H1 (cell line): ENCODE measurements at regions of chr4 and their contacts with region 1.

Region 1: DNA sequence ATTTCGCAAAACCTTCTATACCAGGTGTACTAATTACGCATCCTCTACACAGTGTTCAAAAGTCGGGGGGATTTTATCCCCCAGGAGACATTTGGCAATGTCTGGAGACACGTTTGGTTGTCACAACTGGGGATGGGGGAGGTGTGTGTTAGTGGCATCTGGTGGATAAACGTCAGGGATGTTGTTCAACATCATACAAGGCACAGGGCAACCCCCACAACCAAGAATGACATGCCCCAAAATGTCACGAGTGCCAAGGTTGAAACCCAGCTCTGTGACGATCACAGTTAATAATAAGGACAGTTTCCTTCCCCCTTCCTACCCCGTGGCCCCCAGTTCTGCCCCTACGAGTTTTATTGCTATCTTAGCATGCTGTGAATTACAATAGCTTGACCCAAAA is 15.9 kb upstream of the SEL1L3 start:
- DNase-seq: no peak
- H3K4me3 ChIP-seq: no peak overlapping the region
- H3K27ac ChIP-seq: no peak overlapping the region
- H3K4me1 ChIP-seq: peaks cover 0 to 3% (median 0%) of the 10 kb centered on the region in 4 experiments; a peak in 1 of 7 replicates
- H3K27me3 ChIP-seq: no peaks in the 10 kb centered on the region; a peak in 1 of 7 replicates
- CTCF ChIP-seq: no peak
- EP300 ChIP-seq: no peak
- POLR2A ChIP-seq: no peak
- RAD21 ChIP-seq: no peak

Region 2: GRCh38 chr4:25844961-25845712 is 33.5 kb before region 1 on chr4:
- CTCF ChIA-PET with region 1: no interaction called
- POLR2A ChIA-PET with region 1: no interaction called
- DNase-seq: no peak
- H3K4me3 ChIP-seq: no peak overlapping the region
- H3K27ac ChIP-seq: no peak overlapping the region
- H3K4me1 ChIP-seq: peaks cover 8 to 29% (median 15%) of the 10 kb centered on the region in 4 experiments
- H3K27me3 ChIP-seq: peaks cover 0 to 1% (median 0%) of the 10 kb centered on the region in 4 experiments; a peak in 1 of 7 replicates
- CTCF ChIP-seq: no peak
- EP300 ChIP-seq: no peak
- POLR2A ChIP-seq: no peak
- RAD21 ChIP-seq: no peak

Region 3: DNA sequence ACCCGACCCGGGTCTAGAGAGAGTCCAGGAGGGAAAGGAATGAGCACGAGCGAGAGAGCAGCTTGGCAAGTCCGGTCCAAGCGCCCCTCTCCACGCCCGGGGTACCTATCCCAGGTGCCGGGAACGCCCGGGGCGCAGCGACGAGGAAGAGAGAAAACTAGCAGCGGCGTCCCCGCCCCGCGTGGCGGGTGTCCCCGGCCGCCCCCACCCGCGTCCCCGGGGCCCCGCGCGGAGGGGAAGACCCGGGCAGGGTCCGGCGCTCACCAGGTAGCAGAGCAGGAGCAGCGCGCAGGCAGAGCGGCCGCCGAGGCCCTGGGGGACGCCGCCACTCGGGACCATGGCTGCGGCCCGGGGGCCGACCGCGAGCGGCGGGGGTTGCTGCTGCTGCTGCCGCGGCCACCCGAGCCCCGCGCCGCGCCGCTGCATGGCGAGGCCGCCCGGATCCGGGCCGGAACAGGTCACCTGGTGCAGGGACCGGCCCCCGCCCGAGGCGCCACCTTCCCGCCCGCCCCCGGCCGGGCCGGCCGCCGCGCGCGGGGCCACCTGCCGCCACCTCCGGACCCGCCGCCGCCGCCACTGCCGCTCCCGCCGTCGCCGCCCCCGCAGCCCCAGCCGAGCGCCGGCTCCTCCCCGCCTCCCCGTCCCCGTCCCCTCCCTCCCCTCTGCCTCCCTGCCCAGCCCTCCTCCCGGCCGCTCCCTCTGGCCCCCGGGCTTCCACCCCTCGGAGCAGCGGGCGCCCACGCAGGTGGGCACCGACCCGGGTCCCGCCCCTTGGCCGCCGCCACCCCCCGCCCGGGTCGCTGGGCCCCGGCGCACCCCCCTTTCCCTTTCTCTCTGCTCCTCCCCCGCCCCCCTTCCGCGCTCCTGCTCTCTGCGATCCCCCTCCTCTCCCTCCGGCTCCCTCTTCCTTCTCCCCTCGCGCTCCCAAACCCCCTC is 16.0 kb before region 1 on chr4 and contains the start of gene SEL1L3:
- CTCF ChIA-PET with region 1: interaction called, 10 read pairs
- POLR2A ChIA-PET with region 1: interaction called, 6 read pairs
- DNase-seq: peak; percentile 23 to 74
- H3K4me3 ChIP-seq: peak within 1 kb of the TSS; percentile 46 to 78 (median 73)
- H3K27ac ChIP-seq: peak within 1 kb of the TSS; percentile 50; the same call in 1 of the 2 replicates
- H3K4me1 ChIP-seq: peaks cover 3 to 13% (median 9%) of the 10 kb centered on the region in 4 experiments; a peak in 5 of 7 replicates
- H3K27me3 ChIP-seq: peaks cover 0 to 10% (median 0%) of the 10 kb centered on the region in 4 experiments; a peak in 2 of 7 replicates
- CTCF ChIP-seq: no peak
- EP300 ChIP-seq: no peak
- POLR2A ChIP-seq: no peak
- RAD21 ChIP-seq: no peak
- total RNA-seq, gene SEL1L3: 51.0 and 54.0 TPM in 2 replicates

Region 4: GRCh38 chr4:26105815-26106699 is 227.4 kb after region 1 on chr4:
- CTCF ChIA-PET with region 1: no interaction called
- POLR2A ChIA-PET with region 1: no interaction called
- DNase-seq: no peak
- H3K4me3 ChIP-seq: no peak overlapping the region
- H3K27ac ChIP-seq: no peak overlapping the region
- H3K4me1 ChIP-seq: no peaks in the 10 kb centered on the region
- H3K27me3 ChIP-seq: no peaks in the 10 kb centered on the region
- CTCF ChIP-seq: no peak
- EP300 ChIP-seq: no peak
- POLR2A ChIP-seq: no peak
- RAD21 ChIP-seq: no peak